ENCODE measurements at regions of chr1 and their contacts with region 1.

Region 1: DNA sequence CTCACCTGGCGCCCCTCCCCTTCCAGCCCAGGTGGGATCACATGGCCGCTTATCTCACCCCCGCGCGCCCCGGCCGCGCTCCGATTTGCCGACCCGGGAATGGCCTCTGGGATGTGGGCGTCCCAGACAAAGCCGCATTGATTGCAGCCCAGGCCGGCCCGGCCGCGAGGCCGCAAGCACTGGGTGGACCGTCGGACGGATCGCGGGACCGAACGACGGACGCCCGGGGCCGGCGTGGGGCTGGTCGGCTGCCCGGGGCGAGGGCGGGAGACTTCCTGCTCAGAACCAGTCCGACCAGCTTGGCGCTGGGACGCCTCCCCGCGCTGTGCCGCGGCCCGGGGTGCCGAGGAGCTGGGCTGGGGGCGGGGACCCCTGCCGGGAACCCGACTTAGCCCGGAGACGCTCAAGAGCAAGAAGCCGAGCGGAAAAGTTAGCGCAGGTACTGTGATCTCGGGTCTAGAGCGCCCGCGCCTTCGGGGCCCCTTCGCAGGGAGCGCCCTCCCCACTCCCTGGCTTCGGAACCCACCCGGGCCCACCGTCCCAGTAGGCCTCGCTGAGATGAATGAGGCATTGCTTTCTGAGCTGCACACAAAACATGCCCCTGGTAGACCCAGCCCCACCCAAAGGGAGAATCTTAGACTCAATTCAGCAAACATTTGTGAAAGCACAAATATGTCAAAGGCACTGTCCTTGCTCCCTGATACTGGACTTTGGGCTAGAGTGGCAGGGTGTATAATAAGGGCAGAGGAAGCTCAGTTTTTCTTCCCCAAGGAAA is 415 bp upstream of the LAD1 start:
- DNase-seq: peak; percentile 76
- ATAC-seq: peak; percentile 68
- H3K4me3 Mint-ChIP-seq: peak overlapping the region; percentile 62
- H3K27ac Mint-ChIP-seq: no peak overlapping the region
- H3K4me1 Mint-ChIP-seq: peaks cover 26% of the 10 kb centered on the region
- H3K27me3 Mint-ChIP-seq: peaks cover 8% of the 10 kb centered on the region; the same call in 1 of the 2 replicates
- CTCF ChIP-seq: no peak

Region 2: DNA sequence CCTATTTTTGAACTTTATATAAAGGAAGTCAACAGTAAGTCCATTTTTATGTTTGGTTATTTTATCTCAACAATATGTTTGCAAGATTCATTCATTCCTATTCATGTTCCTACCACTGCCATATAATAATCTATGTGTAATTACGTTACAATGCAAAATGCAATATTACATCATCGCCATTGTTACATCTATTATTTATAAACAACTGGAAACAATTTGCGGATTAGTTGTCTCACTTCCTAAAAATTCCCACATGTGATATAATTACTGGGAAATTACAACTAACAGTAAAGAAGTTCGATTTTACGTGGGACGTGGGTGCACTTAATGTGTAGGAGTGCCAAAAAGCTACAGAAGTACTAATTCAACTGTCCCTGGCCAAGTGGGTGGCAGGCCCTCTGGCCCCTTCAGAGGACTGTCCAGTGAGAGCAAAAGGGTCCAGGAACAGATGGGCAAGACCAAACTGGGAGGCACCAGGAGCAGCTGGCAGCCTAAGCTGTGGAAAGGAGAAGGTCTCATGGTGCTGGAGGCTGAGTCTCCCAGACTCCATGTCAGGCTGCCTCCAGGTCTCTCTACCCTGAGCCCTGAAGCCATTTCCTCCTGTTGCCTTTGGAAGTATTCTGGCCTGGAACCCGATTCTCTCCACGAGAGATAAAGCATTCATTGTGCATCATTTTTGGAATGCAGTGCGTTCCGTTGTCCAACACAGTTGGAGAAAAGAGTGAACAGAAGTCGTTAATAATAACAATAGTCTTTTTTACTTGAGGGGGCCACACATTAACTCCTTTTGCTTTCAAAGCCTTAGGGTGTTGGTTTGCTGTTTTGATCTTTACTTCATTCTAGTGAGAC is 65.0 kb before region 1 on chr1:
- CTCF ChIA-PET with region 1: no interaction called
- POLR2A ChIA-PET with region 1: no interaction called
- DNase-seq: no peak
- ATAC-seq: no peak
- H3K4me3 Mint-ChIP-seq: no peak overlapping the region
- H3K27ac Mint-ChIP-seq: no peak overlapping the region
- H3K4me1 Mint-ChIP-seq: no peaks in the 10 kb centered on the region
- H3K27me3 Mint-ChIP-seq: no peaks in the 10 kb centered on the region
- CTCF ChIP-seq: no peak

Region 3: DNA sequence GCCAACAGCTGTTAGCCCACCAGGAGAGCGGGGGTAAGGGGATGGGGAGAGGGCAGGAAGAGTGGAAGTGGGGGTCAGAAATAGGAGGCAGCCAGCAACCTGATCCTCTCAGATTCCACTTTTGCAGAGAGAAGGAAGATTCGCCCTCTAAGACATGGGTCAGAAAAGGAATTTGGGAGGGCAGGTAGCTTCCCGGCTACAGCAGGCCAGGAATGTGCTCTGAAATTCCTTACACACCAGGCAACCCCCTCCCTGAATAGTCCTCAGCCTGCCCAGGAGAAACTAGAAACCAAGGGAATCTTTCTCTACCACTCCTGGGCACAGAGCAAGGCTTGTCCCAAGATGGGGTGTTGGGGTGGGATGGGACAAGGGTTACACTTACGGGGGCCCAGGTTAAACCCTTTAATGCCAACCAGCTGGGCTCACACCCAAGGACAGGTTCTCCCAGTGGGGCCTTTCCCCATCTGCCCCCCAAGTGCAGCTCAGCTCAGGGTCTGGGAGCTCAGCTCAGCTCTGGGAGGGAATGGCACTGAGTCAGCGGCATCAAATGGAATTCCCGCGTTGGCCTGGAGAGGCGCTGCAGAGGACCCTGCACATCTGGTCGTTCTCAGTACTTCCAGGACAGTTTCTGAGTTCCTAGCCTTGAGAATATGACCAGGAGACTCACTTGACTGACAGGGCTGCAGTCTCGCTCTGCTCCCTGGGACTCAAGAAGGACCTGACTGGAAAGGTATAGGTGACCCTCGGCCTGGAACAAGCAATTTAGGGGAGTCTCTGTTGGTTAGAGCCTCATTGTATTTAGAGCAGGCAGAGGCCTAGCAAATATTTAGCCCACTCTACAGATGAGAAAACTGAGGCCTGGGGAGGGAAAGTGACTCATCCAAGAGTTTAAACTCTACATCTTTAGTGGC is 22.8 kb before region 1 on chr1:
- CTCF ChIA-PET with region 1: interaction called, 23 read pairs
- POLR2A ChIA-PET with region 1: no interaction called
- DNase-seq: peak; percentile 86
- ATAC-seq: peak; percentile 81
- H3K4me3 Mint-ChIP-seq: peak overlapping the region; percentile 58
- H3K27ac Mint-ChIP-seq: peak overlapping the region; percentile 98
- H3K4me1 Mint-ChIP-seq: peaks cover 54% of the 10 kb centered on the region
- H3K27me3 Mint-ChIP-seq: peaks cover 7% of the 10 kb centered on the region; the same call in 1 of the 2 replicates
- CTCF ChIP-seq: peak; percentile 56

Region 4: GRCh38 chr1:201385299-201385891 is 14.1 kb before region 1 on chr1:
- CTCF ChIA-PET with region 1: interaction called, 29 read pairs
- POLR2A ChIA-PET with region 1: interaction called, 5 read pairs
- DNase-seq: peak; percentile 90
- ATAC-seq: peak; percentile 95
- H3K4me3 Mint-ChIP-seq: no peak overlapping the region
- H3K27ac Mint-ChIP-seq: no peak overlapping the region
- H3K4me1 Mint-ChIP-seq: no peaks in the 10 kb centered on the region; the same call in 1 of the 2 replicates
- H3K27me3 Mint-ChIP-seq: no peaks in the 10 kb centered on the region
- CTCF ChIP-seq: peak; percentile 81